Activated CD8-positive, alpha-beta T cell treated with anti-CD3 and anti-CD28 coated beads for 36 hours (primary cell): ENCODE measurements at regions of chr3 and their contacts with region 1.

Region 1: DNA sequence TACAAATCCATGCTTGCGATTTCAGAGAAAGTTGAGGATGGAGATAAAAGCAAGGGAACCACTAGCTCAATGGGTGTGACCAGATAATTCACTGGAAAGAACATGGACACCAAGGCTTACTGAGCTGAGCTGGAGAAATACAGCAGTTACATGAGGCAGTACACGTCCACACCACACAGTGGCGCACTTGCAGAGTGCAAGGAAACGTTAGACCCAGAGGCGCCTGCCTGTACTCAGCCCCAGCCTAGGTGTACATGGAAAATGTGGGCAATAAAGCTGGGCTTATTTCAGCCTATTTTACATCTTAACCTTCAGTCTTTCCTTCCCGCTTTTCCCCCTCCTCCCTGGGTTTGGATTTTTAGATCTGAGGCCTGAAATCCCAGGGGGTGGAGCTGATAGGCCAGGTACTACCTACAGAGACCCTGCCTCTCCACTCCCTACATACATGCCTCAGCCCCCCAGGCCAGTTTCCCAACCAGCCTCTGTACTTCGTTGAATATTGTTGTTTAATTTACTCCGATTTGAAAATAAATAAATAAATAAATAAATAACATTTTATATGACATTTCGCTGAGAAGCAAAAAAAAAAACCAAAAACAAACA is 60.1 kb downstream of the PCOLCE2 start:
- DNase-seq: peak; percentile 90
- ATAC-seq: peak; percentile 100
- H3K4me3 Mint-ChIP-seq: no peak overlapping the region
- H3K27ac Mint-ChIP-seq: no peak overlapping the region
- H3K4me1 Mint-ChIP-seq: no peaks in the 10 kb centered on the region
- H3K27me3 Mint-ChIP-seq: no peaks in the 10 kb centered on the region
- CTCF ChIP-seq: peak; percentile 73

Region 2: DNA sequence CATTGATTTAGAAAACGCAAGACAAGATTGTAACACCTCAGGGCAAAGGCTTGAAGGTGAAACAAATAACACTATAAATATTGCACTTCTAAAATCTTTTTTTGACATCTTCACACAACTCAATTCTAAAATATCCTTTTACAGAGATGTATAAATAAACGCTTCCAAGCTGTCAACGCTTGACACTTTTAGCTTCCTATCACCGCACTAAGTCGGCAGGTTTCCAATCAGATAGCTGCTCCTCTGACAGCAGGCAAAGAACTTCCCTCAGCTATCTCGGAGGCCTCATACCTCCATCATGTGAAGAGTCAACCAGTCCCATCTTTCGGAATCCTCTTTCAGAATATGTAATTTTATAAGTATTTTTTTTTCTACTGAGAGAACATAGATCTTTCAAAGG is 10.9 kb before region 1 on chr3:
- CTCF ChIA-PET with region 1: interaction called, 23 read pairs
- POLR2A ChIA-PET with region 1: interaction called, 3 read pairs
- intact Hi-C with region 1: no loop called
- DNase-seq: no peak
- ATAC-seq: no peak
- H3K4me3 Mint-ChIP-seq: no peak overlapping the region
- H3K27ac Mint-ChIP-seq: no peak overlapping the region
- H3K4me1 Mint-ChIP-seq: no peaks in the 10 kb centered on the region
- H3K27me3 Mint-ChIP-seq: peaks cover 8% of the 10 kb centered on the region
- CTCF ChIP-seq: no peak

Region 3: DNA sequence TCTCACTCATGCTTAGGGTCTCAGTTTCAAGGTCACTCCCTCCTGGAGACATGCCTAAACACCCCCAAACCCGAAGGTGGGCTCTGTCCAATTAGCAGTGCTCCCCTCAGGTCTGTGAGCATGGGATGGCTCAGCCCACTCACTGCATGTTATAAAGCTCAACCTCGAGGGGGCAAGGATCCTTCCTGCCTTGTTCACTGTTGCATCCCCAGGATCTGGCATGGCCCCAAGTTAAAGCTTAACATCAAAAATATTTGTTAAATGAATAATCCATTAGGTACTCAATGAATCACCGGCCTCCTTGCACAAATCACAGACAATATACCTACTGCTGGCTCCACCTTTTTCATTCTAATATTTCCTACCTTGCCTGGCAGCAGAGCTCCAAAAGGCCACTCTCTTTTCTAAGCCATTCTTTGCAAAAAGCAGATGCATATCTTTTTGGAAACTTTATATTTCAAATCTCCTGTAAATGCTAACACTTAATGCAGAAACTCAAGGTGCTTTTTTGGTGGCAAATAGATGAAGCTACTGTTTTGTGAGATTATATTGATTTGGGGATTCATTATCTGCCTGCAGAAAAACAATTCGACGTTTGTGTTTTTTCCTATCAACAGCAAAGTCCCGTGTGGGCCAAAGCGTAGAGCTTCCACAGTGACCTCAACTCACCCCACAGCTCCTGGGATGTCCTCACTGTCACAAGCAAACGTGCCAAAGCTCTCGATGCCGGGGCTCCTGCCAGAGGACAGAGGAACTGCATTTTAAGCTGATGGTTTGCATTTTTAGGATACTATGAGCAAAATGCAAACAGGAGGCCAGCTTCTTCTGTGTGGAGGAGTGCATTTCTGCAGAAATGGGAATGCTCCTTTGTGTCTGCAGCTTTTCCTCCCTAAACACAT is 24.7 kb after region 1 on chr3:
- CTCF ChIA-PET with region 1: interaction called, 13 read pairs
- POLR2A ChIA-PET with region 1: no interaction called
- intact Hi-C with region 1: no loop called
- DNase-seq: no peak
- ATAC-seq: no peak
- H3K4me3 Mint-ChIP-seq: no peak overlapping the region
- H3K27ac Mint-ChIP-seq: no peak overlapping the region
- H3K4me1 Mint-ChIP-seq: no peaks in the 10 kb centered on the region
- H3K27me3 Mint-ChIP-seq: no peaks in the 10 kb centered on the region
- CTCF ChIP-seq: no peak

Region 4: DNA sequence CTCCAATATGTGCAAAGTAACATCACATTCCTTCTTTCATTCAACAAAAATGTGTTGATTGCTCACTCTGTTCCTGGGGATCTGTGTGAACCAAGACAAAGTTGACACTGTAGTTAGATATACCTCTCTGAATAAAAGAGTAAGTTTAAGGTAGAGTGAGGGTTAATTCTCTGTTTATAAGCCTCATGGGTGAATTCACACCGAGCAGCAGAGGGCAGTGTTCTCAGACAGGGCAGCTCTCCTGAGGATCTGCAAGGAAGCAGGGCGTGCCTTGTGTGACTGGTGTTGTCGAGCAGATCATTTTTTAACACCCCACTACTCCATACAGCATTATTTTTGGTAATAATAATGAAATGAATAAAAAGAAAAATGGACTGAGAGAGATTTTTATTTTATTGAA is 100.3 kb after region 1 on chr3:
- CTCF ChIA-PET with region 1: interaction called, 11 read pairs
- POLR2A ChIA-PET with region 1: no interaction called
- intact Hi-C with region 1: no loop called
- DNase-seq: peak; percentile 69
- ATAC-seq: peak; percentile 77
- H3K4me3 Mint-ChIP-seq: no peak overlapping the region
- H3K27ac Mint-ChIP-seq: no peak overlapping the region
- H3K4me1 Mint-ChIP-seq: no peaks in the 10 kb centered on the region
- H3K27me3 Mint-ChIP-seq: peaks cover 25% of the 10 kb centered on the region
- CTCF ChIP-seq: peak; percentile 53

Region 5: DNA sequence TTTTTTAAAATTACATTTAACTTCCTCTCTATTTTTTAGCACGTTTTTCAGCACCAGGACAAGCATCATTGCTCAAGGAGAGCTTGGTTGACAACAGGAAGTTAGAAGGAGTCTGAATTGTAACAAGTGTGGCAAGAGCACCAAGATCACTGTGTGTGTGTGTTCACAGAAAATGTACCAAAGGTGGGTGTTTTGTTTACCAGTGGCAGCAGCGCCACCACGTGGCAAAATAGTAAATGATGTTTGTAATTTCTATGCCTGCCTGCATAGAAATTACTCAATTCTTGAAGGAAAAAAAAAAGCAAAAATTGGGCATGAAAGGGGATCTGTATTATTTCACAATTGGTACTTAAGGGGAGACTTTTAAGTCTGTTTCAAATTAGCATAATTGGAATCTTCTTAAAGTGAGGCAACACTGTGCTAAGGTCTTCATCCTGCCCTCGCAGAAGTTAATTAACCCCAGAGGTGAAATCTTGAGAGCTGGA is 165.2 kb after region 1 on chr3:
- CTCF ChIA-PET with region 1: interaction called, 37 read pairs
- POLR2A ChIA-PET with region 1: no interaction called
- intact Hi-C with region 1: loop called (anchors 5 kb)
- DNase-seq: peak; percentile 81
- ATAC-seq: peak; percentile 68
- H3K4me3 Mint-ChIP-seq: no peak overlapping the region
- H3K27ac Mint-ChIP-seq: no peak overlapping the region
- H3K4me1 Mint-ChIP-seq: peaks cover 2% of the 10 kb centered on the region
- H3K27me3 Mint-ChIP-seq: peaks cover 8% of the 10 kb centered on the region
- CTCF ChIP-seq: peak; percentile 85

Region 6: DNA sequence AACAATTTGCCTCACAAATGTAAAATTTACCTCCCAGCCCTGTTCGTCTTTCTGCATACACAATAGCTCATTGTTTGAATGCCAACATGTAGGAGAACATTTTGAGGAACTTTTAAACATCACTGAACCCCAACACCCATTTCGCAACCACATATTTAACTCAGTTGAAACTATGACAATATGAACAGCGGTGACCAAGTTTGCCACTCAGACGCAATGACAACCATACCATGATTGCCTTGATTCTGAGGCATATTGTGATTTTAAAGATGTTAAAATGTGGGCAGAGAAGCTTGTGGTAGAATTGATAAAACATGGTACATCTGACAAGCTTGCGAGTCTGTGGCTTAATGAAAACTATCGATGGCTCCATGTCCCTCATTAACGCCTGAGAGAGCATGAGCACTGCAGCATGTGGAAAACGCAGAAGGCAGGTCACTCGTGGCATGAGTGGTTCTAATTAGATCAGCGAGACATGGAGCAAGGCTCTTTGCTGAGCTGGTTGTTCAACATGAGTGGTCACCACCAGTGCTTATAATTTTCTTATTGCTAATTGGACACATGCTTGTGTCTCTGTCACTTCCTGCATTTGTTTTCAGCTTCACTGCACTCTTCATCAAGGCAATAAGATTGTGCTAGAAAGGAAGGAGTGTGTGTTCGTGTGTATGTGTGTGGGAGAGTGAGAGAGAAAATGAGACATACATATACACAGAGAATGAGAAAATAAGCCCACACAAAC is 407.6 kb after region 1 on chr3:
- CTCF ChIA-PET with region 1: no interaction called
- POLR2A ChIA-PET with region 1: no interaction called
- intact Hi-C with region 1: no loop called
- DNase-seq: no peak
- ATAC-seq: no peak
- H3K4me3 Mint-ChIP-seq: no peak overlapping the region
- H3K27ac Mint-ChIP-seq: no peak overlapping the region
- H3K4me1 Mint-ChIP-seq: peaks cover 8% of the 10 kb centered on the region
- H3K27me3 Mint-ChIP-seq: no peaks in the 10 kb centered on the region
- CTCF ChIP-seq: no peak